ENCODE measurements at regions of chr1 and their contacts with region 1.

Region 1: GRCh38 chr1:202135221-202135721 is 9.3 kb downstream of the ARL8A start:
- DNase-seq: peak; percentile 60
- ATAC-seq: peak; percentile 96
- H3K4me3 Mint-ChIP-seq: no peak overlapping the region
- H3K27ac Mint-ChIP-seq: no peak overlapping the region
- H3K4me1 Mint-ChIP-seq: no peaks in the 10 kb centered on the region
- H3K27me3 Mint-ChIP-seq: no peaks in the 10 kb centered on the region
- CTCF ChIP-seq: peak; percentile 90

Region 2: DNA sequence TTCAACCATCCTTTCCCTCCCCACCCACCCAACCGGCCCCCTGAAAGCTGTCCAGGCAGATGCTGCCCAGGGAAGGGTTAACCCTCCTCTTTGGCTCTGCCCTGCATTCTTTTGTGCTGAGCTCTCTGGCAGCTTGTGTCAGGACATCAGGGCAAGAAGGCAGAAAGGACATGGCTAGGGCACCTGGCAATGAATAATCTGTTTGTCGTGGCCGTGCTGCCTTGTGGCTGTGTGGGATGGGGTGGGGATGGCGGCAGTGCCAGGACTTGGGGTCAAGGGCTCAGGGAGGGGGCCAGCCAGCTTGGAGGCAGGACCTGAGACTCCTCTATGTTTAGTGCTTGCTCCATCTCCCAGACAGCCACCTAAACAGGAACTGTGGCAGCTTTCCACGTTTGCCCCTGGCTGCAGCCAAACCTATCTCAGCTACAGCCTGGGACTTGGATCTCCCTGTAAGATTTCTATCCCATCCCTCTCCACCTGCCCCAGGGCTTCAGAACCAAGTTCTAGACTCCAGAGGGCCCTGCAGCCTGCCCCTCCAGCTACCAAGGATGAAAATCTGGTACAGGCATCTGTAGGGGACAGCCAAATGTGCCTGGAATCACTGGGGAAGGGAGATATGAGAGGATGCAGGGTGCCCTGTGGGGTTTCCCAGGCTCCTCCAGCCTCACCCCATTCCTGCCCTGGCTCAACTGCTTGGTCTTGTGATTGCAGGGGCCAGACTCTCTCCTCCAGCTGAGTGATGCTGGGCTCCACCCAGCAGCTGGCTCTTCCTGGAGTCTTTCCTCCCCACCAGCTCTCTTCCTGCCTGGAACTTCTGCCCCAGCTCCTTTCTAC is 22.2 kb before region 1 on chr1:
- CTCF ChIA-PET with region 1: interaction called, 12 read pairs
- POLR2A ChIA-PET with region 1: no interaction called
- intact Hi-C with region 1: no loop called
- DNase-seq: no peak
- ATAC-seq: no peak
- H3K4me3 Mint-ChIP-seq: no peak overlapping the region
- H3K27ac Mint-ChIP-seq: no peak overlapping the region
- H3K4me1 Mint-ChIP-seq: peaks cover 2% of the 10 kb centered on the region
- H3K27me3 Mint-ChIP-seq: no peaks in the 10 kb centered on the region
- CTCF ChIP-seq: no peak

Region 3: DNA sequence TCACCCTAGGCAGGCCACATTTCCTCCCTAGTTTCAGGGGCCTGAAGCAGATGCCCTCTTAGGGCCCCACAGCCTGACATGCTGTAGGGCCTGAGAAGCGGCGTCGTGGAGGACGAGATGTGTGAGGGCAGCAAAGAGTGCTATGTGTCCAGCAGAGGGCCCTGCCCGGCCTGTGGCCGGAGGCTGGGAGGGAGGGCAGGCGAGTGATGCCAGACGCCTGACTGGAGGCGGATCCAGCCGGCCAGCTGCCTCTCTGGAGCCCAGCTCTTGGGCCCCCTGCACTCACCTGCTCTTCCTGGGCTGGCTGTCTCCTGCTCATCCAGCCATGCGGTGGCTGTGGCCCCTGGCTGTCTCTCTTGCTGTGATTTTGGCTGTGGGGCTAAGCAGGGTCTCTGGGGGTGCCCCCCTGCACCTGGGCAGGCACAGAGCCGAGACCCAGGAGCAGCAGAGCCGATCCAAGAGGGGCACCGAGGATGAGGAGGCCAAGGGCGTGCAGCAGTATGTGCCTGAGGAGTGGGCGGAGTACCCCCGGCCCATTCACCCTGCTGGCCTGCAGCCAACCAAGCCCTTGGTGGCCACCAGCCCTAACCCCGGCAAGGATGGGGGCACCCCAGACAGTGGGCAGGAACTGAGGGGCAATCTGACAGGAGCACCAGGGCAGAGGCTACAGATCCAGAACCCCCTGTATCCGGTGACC is 12.5 kb before region 1 on chr1 and contains the start of gene GPR37L1:
- CTCF ChIA-PET with region 1: interaction called, 11 read pairs
- POLR2A ChIA-PET with region 1: no interaction called
- intact Hi-C with region 1: no loop called
- DNase-seq: no peak
- ATAC-seq: no peak
- H3K4me3 Mint-ChIP-seq: no peak within 1 kb of the TSS
- H3K27ac Mint-ChIP-seq: no peak within 1 kb of the TSS
- H3K4me1 Mint-ChIP-seq: no peaks in the 10 kb centered on the region
- H3K27me3 Mint-ChIP-seq: peaks cover 5% of the 10 kb centered on the region
- CTCF ChIP-seq: no peak
- total RNA-seq, gene GPR37L1: not detected

Measured in activated CD8-positive, alpha-beta T cell treated with anti-CD3 and anti-CD28 coated beads for 36 hours (primary cell).